ENCODE measurements at regions of chr4 and their contacts with region 1.

Region 1: GRCh38 chr4:99462875-99463464 is 27.8 kb upstream of the ADH7 start:
- DNase-seq: peak; percentile 51 to 80 (median 76)
- H3K4me3 ChIP-seq: no peak overlapping the region
- H3K27ac ChIP-seq: no peak overlapping the region
- H3K4me1 ChIP-seq: no peaks in the 10 kb centered on the region
- H3K27me3 ChIP-seq: peaks cover 0 to 4% (median 0%) of the 10 kb centered on the region in 5 experiments

Region 2: DNA sequence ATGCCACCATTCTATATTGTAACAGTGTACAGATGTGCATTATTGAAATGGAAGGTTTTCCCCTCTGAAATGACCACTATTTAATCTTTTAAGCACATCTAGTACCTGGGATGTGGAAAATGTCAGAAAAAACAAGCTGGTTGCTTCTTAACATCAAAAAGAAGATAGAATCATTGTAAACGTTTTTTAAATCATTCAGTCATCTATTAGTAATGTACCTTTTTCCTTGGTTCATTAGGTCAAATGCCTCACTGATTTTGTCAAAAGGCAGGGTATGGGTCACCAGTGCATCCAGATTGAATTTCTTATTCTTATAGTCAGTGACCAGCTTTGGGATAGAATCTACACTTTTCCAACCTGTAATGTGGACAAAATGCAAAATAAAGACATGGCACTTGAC is 336.6 kb before region 1 on chr4:
- CTCF ChIA-PET with region 1: no interaction called
- POLR2A ChIA-PET with region 1: no interaction called
- DNase-seq: no peak
- H3K4me3 ChIP-seq: no peak overlapping the region
- H3K27ac ChIP-seq: no peak overlapping the region
- H3K4me1 ChIP-seq: no peaks in the 10 kb centered on the region
- H3K27me3 ChIP-seq: no peaks in the 10 kb centered on the region

Region 3: DNA sequence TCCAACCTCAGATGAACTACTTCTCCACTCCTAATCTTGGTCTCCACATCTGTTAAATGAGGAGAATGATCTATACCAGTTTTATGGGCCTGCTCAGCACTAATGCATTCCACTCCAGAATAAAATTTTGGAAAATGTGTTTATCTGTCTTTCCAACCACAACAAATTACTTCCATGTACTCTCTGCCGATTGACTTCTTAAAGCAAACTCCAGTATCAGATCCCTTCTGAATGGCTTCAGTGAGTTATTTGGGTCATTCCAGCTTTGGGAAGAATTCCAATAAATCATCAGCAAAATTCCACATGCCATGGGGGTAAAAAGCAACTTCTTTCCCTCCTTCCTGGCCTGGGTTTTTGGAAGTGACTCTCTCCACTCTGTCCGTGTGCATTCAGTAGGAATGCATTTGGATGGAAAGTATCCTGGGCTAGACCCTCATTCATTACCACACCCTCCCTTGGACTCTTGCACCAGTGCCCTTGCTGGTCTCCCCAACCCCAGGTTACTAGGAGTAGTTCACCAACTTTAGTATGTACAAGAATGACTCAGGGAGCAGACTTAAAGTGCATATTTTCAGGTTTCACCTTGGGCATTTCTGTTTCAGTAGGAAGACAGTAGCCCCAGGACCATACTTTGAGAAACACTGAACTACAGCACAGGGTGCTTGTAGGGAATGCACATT is 228.5 kb before region 1 on chr4:
- CTCF ChIA-PET with region 1: no interaction called
- POLR2A ChIA-PET with region 1: no interaction called
- DNase-seq: no peak
- H3K4me3 ChIP-seq: no peak overlapping the region
- H3K27ac ChIP-seq: no peak overlapping the region
- H3K4me1 ChIP-seq: no peaks in the 10 kb centered on the region
- H3K27me3 ChIP-seq: no peaks in the 10 kb centered on the region

Region 4: DNA sequence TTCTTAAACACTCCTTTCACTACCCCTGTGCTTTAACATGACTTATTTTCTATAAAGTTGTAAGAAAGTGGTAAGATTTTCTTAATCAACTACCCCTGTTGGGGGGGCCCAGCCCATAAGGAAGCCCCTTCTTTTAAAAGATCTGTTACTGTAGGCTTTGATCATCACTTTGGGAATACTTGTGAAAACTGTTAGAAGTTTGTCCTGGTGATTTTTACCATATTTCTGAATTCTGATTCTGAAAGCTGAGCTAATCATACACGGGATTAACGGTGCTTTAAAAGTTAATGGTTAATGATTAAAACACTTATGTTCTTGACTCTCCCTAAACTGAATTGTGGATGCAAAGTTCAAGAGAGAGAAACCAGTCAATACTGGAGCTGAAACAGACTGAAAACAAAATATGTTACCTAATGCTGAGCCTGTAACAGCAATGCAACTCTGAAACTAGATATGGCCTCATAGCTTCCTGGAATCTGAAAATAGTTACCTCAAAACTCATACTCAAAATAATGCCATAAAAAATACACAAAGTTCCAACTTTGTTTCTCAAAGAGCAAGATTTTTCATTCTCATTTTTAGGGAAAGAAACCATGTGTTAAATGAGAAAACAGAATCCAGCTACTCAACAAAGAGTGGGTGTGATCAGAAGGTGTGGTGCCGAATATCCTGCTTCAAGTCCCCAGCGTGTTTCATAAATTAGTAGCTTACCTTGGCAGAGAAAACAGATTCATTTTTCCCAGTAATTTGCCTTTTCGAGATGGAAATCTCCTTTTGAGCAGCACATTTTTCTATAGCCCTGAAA is 59.4 kb before region 1 on chr4:
- CTCF ChIA-PET with region 1: no interaction called
- POLR2A ChIA-PET with region 1: no interaction called
- DNase-seq: no peak
- H3K4me3 ChIP-seq: no peak overlapping the region
- H3K27ac ChIP-seq: no peak overlapping the region
- H3K4me1 ChIP-seq: no peaks in the 10 kb centered on the region
- H3K27me3 ChIP-seq: no peaks in the 10 kb centered on the region

Region 5: GRCh38 chr4:99473131-99473530 is 10.2 kb after region 1 on chr4:
- CTCF ChIA-PET with region 1: interaction called, 12 read pairs
- POLR2A ChIA-PET with region 1: no interaction called
- DNase-seq: no peak
- H3K4me3 ChIP-seq: no peak overlapping the region
- H3K27ac ChIP-seq: no peak overlapping the region
- H3K4me1 ChIP-seq: no peaks in the 10 kb centered on the region
- H3K27me3 ChIP-seq: no peaks in the 10 kb centered on the region

Region 6: GRCh38 chr4:99563310-99564186 is 100.6 kb after region 1 on chr4 and contains the start of gene TRMT10A:
- CTCF ChIA-PET with region 1: no interaction called
- POLR2A ChIA-PET with region 1: no interaction called
- DNase-seq: peak; percentile 99 to 100 (median 99)
- H3K4me3 ChIP-seq: peak within 1 kb of the TSS; percentile 69 to 95 (median 91)
- H3K27ac ChIP-seq: peak within 1 kb of the TSS; percentile 98 to 99
- H3K4me1 ChIP-seq: peaks cover 0 to 10% (median 8%) of the 10 kb centered on the region in 4 experiments
- H3K27me3 ChIP-seq: peaks cover 0 to 5% (median 3%) of the 10 kb centered on the region in 5 experiments

Measured in common myeloid progenitor, CD34-positive (primary cell).